Right ventricle myocardium inferior (tissue), 1 donor: ENCODE measurements at regions of chr10 and their contacts with region 1.

Region 1: DNA sequence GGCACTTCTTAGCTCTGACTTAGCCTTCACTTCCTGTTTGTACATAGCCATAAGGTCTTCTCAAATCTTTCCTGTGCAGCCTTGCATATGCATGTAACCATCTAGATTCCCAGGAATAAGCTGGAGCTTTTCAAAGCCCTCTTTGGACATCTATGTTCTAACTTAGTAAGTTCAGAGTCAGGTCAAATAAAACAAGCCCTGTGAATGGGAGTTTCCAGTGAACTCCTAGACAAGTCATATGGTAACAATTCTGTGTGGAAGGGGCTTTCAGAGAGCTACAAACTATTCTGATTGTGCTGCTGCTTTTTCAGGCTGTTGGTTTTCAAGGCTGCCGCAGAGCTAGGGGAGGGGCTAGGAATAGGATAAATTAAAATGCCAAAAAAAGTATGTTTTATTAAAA is 208.4 kb upstream of the AKR1E2 start:
- DNase-seq: no peak
- ATAC-seq: no peak

Region 2: GRCh38 chr10:4229106-4229505 is 388.5 kb before region 1 on chr10:
- intact Hi-C with region 1: no loop called
- DNase-seq: no peak
- ATAC-seq: no peak

Region 3: DNA sequence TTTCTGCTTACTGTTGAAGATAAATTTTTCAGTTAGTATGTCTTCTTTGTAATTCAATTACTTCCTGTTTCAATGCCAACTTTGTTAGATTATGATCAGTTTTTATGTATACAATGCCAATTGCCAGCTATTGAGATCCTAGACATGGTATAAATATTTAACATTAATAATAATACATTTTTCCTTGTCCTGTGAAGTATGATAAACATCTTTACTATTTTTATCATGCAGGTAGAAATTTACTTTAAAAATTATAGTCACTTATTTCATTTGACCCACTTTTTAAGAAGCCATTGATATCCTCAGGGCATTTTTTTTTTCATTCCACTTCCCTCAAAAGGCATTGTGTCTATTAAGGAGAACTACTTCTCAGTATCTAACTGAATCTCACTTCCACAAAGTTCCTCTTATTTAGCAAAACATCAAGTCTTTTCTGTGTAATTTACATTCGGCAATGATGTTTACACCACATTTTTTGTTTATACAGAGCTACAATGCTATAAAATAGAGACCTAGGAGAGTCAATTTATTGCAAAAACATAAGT is 179.9 kb before region 1 on chr10:
- intact Hi-C with region 1: no loop called
- DNase-seq: no peak
- ATAC-seq: no peak

Region 4: GRCh38 chr10:4541292-4541691 is 76.3 kb before region 1 on chr10:
- intact Hi-C with region 1: loop called (anchors 5 kb)
- DNase-seq: no peak
- ATAC-seq: peak; percentile 28